HEK293 (cell line): ENCODE measurements at regions of chr15 and their contacts with region 1.

Region 1: DNA sequence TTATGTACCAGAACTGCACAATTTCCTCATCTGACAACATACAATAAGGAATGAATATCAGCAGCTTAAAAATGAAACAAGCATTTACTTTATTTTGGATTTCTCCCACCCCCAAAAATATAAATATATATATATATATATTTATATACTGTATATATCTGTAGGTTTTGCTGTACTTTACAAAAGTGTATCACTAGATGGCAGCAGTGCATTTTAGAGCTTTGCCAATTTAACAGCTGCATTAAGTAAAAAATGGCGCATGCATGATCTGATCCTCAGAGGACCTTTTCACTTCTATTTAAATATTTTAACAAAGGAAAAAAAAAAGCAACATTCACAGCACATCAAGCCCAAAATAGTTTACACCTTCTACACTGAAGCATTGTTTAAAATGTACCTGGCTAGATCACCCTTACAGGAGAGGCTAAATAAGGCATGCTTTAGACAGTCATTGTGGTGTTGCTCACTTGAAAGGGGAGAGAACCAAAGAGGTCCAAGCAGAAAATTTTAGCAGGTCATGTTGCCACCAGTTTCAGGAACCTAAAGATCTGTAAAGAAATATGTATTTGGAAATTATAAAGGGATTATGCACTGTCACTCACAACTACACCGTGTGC is 72.6 kb downstream of the NPTN start:
- H3K4me3 ChIP-seq: no peak overlapping the region
- H3K27ac ChIP-seq: no peak overlapping the region
- H3K4me1 ChIP-seq: peaks cover 7% of the 10 kb centered on the region; the same call in 1 of the 2 replicates
- CTCF ChIP-seq: no peak

Region 2: GRCh38 chr15:73305331-73306211 is 255.0 kb before region 1 on chr15:
- CTCF ChIA-PET with region 1: interaction called, 10 read pairs
- POLR2A ChIA-PET with region 1: no interaction called
- H3K4me3 ChIP-seq: no peak overlapping the region
- H3K27ac ChIP-seq: no peak overlapping the region
- H3K4me1 ChIP-seq: no peaks in the 10 kb centered on the region
- CTCF ChIP-seq: peak; percentile 77

Region 3: GRCh38 chr15:73741321-73741836 is 180.8 kb after region 1 on chr15:
- CTCF ChIA-PET with region 1: no interaction called
- POLR2A ChIA-PET with region 1: no interaction called
- H3K4me3 ChIP-seq: no peak overlapping the region
- H3K27ac ChIP-seq: no peak overlapping the region
- H3K4me1 ChIP-seq: peaks cover 2% of the 10 kb centered on the region; the same call in 1 of the 2 replicates
- CTCF ChIP-seq: no peak